HepG2 (cell line): ENCODE measurements at regions of chr9 and their contacts with region 1.

Region 1: GRCh38 chr9:121621113-121621449 is 30.4 kb upstream of the DAB2IP start:
- DNase-seq: peak; percentile 41
- ATAC-seq: peak; percentile 82
- H3K4me3 ChIP-seq: no peak overlapping the region
- H3K27ac ChIP-seq: no peak overlapping the region
- H3K4me1 ChIP-seq: peaks cover 36% of the 10 kb centered on the region
- H3K27me3 ChIP-seq: no peaks in the 10 kb centered on the region
- CTCF ChIP-seq: peak; percentile 77
- EP300 ChIP-seq: no peak
- POLR2A ChIP-seq: no peak
- RAD21 ChIP-seq: no peak

Region 2: DNA sequence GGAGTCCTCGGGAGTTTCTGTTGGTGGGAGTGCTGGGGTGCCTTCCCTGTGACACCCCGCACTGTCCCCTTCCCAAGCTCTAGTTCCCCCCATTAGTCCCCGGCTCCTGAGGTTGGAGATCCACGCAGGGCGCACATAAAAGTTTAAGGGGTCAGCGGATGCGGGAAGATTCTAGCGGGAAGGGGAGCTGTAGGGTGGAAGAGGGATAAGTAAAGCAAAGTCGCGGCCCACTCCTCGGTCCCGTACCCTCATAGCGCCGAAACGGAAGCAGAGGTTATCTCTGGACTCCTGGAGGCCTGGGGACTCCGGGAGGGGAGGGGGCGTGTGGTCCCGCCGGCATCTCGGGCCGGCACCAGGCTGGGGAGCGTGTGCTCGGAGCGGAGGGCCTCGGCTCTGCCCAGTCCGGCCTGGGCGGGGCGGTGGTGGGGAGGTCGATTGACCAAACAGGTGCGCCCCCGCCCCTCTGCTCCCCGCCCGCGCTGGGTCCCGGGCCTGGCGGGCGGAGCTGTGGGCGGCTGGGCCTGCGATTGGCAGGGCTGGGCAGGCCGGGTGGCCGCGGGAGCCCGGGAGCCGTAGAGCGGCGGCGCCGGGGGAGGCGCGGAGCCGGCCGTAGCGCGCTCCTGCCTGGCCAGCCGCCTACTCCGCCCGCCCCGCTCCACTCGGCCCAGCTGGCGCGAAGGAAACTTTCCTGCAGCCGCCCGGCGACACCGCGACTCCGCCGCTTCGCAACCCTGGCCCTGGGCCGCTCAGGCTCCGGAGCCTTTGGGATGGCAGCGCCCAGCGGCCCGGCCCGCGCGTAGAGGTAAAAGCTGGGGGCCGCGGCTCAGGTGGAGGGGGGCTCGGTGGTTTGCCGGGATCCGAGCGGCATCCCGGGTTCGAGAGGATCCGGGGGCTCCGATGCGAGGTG is 21.9 kb before region 1 on chr9:
- CTCF ChIA-PET with region 1: no interaction called
- POLR2A ChIA-PET with region 1: no interaction called
- in situ Hi-C with region 1: no loop called
- intact Hi-C with region 1: loop called (anchors 1 kb)
- DNase-seq: peak; percentile 64
- ATAC-seq: peak; percentile 94
- H3K4me3 ChIP-seq: peak overlapping the region; percentile 71 to 83 (median 82)
- H3K27ac ChIP-seq: no peak overlapping the region
- H3K4me1 ChIP-seq: peaks cover 37% of the 10 kb centered on the region
- H3K27me3 ChIP-seq: 0 out of 5 replicates have a peak, but pooled peaks cover 0 to 2% of the 10 kb centered on the region in 2 experiments
- CTCF ChIP-seq: no peak; the same call in 1 of the 2 replicates
- EP300 ChIP-seq: no peak
- POLR2A ChIP-seq: no peak
- RAD21 ChIP-seq: no peak